CD4-positive, alpha-beta T cell (primary cell): ENCODE measurements at regions of chr5 and their contacts with region 1.

Region 1: GRCh38 chr5:43049236-43049635 is 9.1 kb upstream of the ANXA2R start:
- DNase-seq: no peak
- ATAC-seq: no peak
- H3K4me3 ChIP-seq: no peak overlapping the region
- H3K4me3 Mint-ChIP-seq: no peak overlapping the region
- H3K27ac ChIP-seq: no peak overlapping the region
- H3K27ac Mint-ChIP-seq: peak overlapping the region; percentile 41
- H3K4me1 ChIP-seq: peaks cover 14% of the 10 kb centered on the region
- H3K4me1 Mint-ChIP-seq: peaks cover 46% of the 10 kb centered on the region
- H3K27me3 ChIP-seq: no peaks in the 10 kb centered on the region
- H3K27me3 Mint-ChIP-seq: no peaks in the 10 kb centered on the region
- CTCF ChIP-seq: no peak

Region 2: DNA sequence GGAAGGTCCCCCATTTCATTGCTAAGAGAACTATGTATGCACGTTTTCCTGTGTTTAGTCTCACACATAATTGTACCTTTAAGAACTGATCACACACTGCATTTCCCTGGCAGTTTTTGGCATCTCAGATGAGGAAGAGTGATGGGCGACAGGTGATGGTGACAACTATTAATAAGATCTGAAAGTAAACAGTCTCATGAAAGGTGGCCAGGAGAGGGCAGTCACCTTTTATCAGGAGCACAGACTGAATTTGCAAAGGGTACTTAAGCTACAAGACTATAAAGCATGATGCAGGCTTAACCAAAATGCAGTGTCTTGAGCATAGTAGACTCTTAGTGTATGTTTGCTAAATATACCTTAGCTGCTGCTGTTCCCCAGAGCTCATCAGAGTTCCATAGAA is 534.5 kb before region 1 on chr5:
- CTCF ChIA-PET with region 1: no interaction called
- POLR2A ChIA-PET with region 1: no interaction called
- intact Hi-C with region 1: no loop called
- DNase-seq: peak in 2 of 14 experiments; percentile 20 to 23
- ATAC-seq: no peak
- H3K4me3 ChIP-seq: no peak overlapping the region
- H3K4me3 Mint-ChIP-seq: no peak overlapping the region
- H3K27ac ChIP-seq: no peak overlapping the region
- H3K27ac Mint-ChIP-seq: no peak overlapping the region
- H3K4me1 ChIP-seq: no peaks in the 10 kb centered on the region
- H3K4me1 Mint-ChIP-seq: no peaks in the 10 kb centered on the region
- H3K27me3 ChIP-seq: no peaks in the 10 kb centered on the region
- H3K27me3 Mint-ChIP-seq: no peaks in the 10 kb centered on the region
- CTCF ChIP-seq: no peak

Region 3: DNA sequence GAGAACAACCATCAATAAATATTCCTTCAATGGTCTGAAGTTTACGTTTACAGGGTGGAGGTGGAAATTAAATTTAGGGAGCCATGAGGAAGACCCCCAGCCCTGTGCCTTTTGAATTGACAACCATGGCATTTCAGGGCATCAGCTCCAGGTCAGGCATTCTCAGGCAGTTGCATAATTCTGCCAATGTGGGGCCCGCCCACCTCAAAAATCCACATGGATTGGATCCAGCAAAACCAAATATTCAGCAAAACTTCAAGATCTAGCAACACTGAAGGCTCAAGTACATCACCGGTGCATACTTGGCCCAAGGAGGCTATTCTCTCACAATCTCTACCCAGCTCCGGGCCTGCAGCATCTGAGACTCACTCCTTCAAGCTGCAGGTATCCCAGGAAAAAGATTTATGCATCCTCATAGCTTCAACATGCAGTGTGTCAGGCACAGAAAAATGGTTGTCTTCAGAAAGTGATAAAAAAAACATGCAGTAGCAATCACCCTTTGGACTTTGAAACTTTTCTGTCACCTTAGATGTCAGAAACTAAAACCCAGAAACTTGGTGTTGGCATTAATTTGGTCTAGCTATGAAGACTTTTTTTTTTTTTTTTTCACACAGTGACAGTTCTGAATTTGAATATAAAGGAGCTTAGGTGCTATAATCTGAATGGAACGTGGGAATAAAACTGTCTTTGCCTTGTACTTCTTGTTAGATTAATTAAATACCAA is 12.3 kb after region 1 on chr5:
- CTCF ChIA-PET with region 1: interaction called, 65 read pairs
- POLR2A ChIA-PET with region 1: interaction called, 703 read pairs
- intact Hi-C with region 1: loop called in 1 of 2 experiments (anchors 1 kb)
- DNase-seq: no peak
- ATAC-seq: no peak
- H3K4me3 ChIP-seq: no peak overlapping the region
- H3K4me3 Mint-ChIP-seq: no peak overlapping the region
- H3K27ac ChIP-seq: peak overlapping the region in 1 of 2 donors; percentile 11
- H3K27ac Mint-ChIP-seq: peak overlapping the region; percentile 52
- H3K4me1 ChIP-seq: peaks cover 13% of the 10 kb centered on the region
- H3K4me1 Mint-ChIP-seq: peaks cover 16% of the 10 kb centered on the region
- H3K27me3 ChIP-seq: no peaks in the 10 kb centered on the region
- H3K27me3 Mint-ChIP-seq: no peaks in the 10 kb centered on the region
- CTCF ChIP-seq: no peak

Region 4: DNA sequence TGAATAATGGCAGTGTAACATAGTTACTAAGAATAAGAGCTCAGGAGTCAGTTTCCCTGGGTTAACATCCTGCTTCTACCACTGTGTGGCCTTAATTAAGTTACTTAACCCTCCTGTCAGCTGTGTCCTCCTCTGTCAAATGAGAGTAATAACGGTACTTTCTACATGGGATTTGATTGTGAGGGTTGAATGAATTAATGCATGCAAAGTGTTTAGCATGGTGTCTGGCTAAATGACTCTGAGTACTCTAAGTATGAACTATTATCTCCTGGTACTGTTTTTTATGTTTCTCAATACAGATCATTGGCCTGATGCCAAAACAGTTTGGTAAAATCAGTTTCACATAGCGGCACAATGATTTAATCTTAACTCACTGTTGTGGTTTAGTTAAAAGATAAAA is 91.0 kb after region 1 on chr5:
- CTCF ChIA-PET with region 1: no interaction called
- POLR2A ChIA-PET with region 1: no interaction called
- intact Hi-C with region 1: no loop called
- DNase-seq: peak in 3 of 14 experiments; percentile 30 to 44 (median 34)
- ATAC-seq: peak; percentile 29
- H3K4me3 ChIP-seq: no peak overlapping the region
- H3K4me3 Mint-ChIP-seq: no peak overlapping the region
- H3K27ac ChIP-seq: peak overlapping the region in 1 of 2 donors; percentile 36
- H3K27ac Mint-ChIP-seq: peak overlapping the region; percentile 61
- H3K4me1 ChIP-seq: peaks cover 11% of the 10 kb centered on the region
- H3K4me1 Mint-ChIP-seq: peaks cover 61% of the 10 kb centered on the region
- H3K27me3 ChIP-seq: no peaks in the 10 kb centered on the region
- H3K27me3 Mint-ChIP-seq: no peaks in the 10 kb centered on the region
- CTCF ChIP-seq: no peak

Region 5: GRCh38 chr5:43543434-43543833 is 494.2 kb after region 1 on chr5:
- CTCF ChIA-PET with region 1: no interaction called
- POLR2A ChIA-PET with region 1: no interaction called
- intact Hi-C with region 1: no loop called
- DNase-seq: no peak
- ATAC-seq: no peak
- H3K4me3 ChIP-seq: no peak overlapping the region
- H3K4me3 Mint-ChIP-seq: no peak overlapping the region
- H3K27ac ChIP-seq: no peak overlapping the region
- H3K27ac Mint-ChIP-seq: peak overlapping the region; percentile 24
- H3K4me1 ChIP-seq: no peaks in the 10 kb centered on the region
- H3K4me1 Mint-ChIP-seq: peaks cover 23% of the 10 kb centered on the region
- H3K27me3 ChIP-seq: no peaks in the 10 kb centered on the region
- H3K27me3 Mint-ChIP-seq: no peaks in the 10 kb centered on the region
- CTCF ChIP-seq: no peak